ENCODE measurements at regions of chr20 and their contacts with region 1.

Region 1: DNA sequence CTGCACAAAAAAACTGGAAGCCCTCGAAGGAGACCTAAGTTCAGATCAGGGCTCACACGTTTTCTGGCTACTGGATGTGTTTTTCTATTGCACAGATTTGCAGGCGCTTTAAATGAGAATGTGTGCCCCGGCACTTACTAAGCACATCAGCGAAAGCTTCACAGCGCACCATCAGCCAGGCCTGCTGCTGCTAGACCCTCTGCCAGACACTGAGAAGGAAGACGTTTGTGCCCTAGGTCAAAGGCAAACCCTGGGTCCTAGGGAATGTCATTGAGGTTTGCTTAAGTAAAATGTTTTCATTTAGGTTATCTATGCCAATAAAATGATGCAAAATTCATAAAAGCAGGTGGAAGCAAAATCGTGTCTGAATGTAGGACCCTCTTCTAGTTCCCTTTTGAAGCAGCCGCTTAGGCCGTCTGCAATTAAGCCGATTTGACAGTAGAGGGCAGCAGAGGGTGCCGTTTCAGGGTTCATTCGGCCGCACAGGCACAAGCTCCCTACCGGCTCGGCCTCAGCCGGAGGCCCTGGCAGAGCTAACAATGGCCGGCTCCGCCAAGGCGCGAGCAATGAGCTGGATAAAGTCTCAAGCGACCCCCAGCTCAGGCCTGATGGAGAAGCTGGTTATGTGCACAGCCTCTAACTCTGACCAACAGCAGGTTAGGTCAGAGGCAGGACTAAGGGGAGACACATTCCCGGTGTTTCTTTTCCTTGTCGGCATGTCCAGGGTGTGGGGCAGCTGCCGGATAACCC is 107.2 kb upstream of the FOXA2 start:
- DNase-seq: peak; percentile 73 to 78 (median 74)
- ATAC-seq: peak; percentile 95
- H3K4me3 ChIP-seq: no peak overlapping the region
- H3K27ac ChIP-seq: no peak overlapping the region; the same call in 2 of the 3 replicates
- H3K4me1 ChIP-seq: peaks cover 0 to 3% of the 10 kb centered on the region in 2 experiments; a peak in 3 of 5 replicates
- H3K27me3 ChIP-seq: no peaks in the 10 kb centered on the region; a peak in 1 of 5 replicates
- CTCF ChIP-seq: peak; percentile 68 to 82 (median 80)
- EP300 ChIP-seq: no peak
- POLR2A ChIP-seq: no peak
- RAD21 ChIP-seq: peak; percentile 86 to 88

Region 2: GRCh38 chr20:22601361-22602141 is 90.0 kb before region 1 on chr20:
- CTCF ChIA-PET with region 1: no interaction called
- POLR2A ChIA-PET with region 1: no interaction called
- in situ Hi-C with region 1: no loop called
- intact Hi-C with region 1: no loop called
- DNase-seq: no peak
- ATAC-seq: no peak
- H3K4me3 ChIP-seq: no peak overlapping the region
- H3K27ac ChIP-seq: no peak overlapping the region
- H3K4me1 ChIP-seq: no peaks in the 10 kb centered on the region
- H3K27me3 ChIP-seq: peaks cover 0 to 7% of the 10 kb centered on the region in 2 experiments; a peak in 2 of 5 replicates
- CTCF ChIP-seq: no peak
- EP300 ChIP-seq: no peak
- POLR2A ChIP-seq: no peak
- RAD21 ChIP-seq: no peak

Region 3: GRCh38 chr20:22789676-22790075 is 98.1 kb after region 1 on chr20:
- CTCF ChIA-PET with region 1: no interaction called
- POLR2A ChIA-PET with region 1: no interaction called
- in situ Hi-C with region 1: no loop called
- intact Hi-C with region 1: loop called (anchors 10 kb)
- DNase-seq: no peak
- ATAC-seq: no peak
- H3K4me3 ChIP-seq: no peak overlapping the region
- H3K27ac ChIP-seq: no peak overlapping the region
- H3K4me1 ChIP-seq: no peaks in the 10 kb centered on the region
- H3K27me3 ChIP-seq: peaks cover 3 to 16% of the 10 kb centered on the region in 2 experiments; a peak in 4 of 5 replicates
- CTCF ChIP-seq: no peak
- EP300 ChIP-seq: no peak
- POLR2A ChIP-seq: no peak
- RAD21 ChIP-seq: no peak

Region 4: DNA sequence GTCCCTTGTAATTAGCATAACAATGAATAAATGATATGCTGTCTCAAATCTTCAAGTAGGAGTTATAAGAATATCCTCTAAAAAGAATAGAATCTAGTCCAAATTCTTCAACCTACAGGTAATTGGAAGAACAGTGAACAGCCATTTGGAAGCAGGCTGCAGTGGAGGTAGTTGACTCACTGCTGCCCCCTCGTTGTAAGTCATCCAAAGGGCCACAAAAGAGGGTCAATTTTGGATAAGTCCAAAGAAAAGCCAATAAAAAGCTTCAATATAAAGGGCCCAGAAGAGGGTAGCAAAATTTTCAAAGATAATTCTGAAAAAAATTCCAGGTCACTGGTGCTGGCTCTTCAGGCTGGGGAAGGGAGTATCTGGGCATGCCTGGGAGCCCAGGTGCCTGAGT is 282.8 kb after region 1 on chr20:
- CTCF ChIA-PET with region 1: no interaction called
- POLR2A ChIA-PET with region 1: no interaction called
- in situ Hi-C with region 1: no loop called
- intact Hi-C with region 1: loop called (anchors 1 kb)
- DNase-seq: peak; percentile 35 to 54 (median 52)
- ATAC-seq: peak; percentile 75
- H3K4me3 ChIP-seq: no peak overlapping the region
- H3K27ac ChIP-seq: no peak overlapping the region
- H3K4me1 ChIP-seq: no peaks in the 10 kb centered on the region
- H3K27me3 ChIP-seq: no peaks in the 10 kb centered on the region
- CTCF ChIP-seq: peak; percentile 57 to 69 (median 63)
- EP300 ChIP-seq: no peak
- POLR2A ChIP-seq: no peak
- RAD21 ChIP-seq: peak; percentile 71 to 79

Region 5: DNA sequence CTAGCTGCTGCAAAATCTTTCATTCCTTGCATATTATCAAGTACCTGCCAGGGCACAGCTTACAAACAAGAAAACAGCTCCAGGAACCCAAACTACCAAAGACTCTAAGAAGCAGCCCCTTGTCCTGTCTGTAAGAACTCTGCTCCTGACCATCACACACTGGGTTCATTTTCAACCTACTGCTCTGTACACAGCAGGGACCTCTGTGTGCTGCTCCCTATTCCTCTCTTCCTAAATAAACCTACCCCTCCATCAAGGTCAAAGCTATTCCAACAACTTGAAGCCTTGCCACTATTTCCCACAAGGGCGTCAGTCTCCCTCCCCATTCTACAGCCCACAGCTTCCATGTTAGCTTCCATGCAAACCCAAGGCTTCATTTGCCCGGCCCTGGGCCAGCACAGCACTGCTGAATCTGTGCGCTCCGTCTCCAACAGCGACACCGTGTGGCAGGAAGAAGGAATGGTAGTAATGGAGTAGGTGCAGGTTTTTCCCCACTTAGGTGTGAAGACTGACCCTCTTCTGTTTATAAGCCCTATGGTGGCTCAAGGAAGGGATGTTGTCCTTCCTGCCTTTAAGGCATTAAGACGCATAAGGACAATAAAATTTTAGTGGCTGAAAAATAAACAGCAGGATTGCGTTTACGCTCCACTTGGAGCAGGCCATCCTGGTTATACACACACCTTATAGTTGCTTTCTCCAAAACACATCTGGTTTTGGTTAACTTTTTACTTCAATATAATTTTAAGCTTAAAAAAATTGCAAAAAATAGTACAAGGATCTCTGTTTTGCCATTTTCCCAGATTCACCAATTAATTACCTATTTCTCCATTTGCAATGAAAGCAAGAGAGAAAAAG is 543.9 kb after region 1 on chr20:
- CTCF ChIA-PET with region 1: no interaction called
- POLR2A ChIA-PET with region 1: no interaction called
- in situ Hi-C with region 1: no loop called
- intact Hi-C with region 1: loop called (anchors 10 kb)
- DNase-seq: peak; percentile 61 to 75 (median 64)
- ATAC-seq: peak; percentile 99
- H3K4me3 ChIP-seq: no peak overlapping the region
- H3K27ac ChIP-seq: no peak overlapping the region
- H3K4me1 ChIP-seq: peaks cover 0 to 3% of the 10 kb centered on the region in 2 experiments; a peak in 1 of 5 replicates
- H3K27me3 ChIP-seq: no peaks in the 10 kb centered on the region
- CTCF ChIP-seq: peak; percentile 77 to 86 (median 78)
- EP300 ChIP-seq: no peak
- POLR2A ChIP-seq: no peak
- RAD21 ChIP-seq: peak; percentile 66 to 89

Region 6: DNA sequence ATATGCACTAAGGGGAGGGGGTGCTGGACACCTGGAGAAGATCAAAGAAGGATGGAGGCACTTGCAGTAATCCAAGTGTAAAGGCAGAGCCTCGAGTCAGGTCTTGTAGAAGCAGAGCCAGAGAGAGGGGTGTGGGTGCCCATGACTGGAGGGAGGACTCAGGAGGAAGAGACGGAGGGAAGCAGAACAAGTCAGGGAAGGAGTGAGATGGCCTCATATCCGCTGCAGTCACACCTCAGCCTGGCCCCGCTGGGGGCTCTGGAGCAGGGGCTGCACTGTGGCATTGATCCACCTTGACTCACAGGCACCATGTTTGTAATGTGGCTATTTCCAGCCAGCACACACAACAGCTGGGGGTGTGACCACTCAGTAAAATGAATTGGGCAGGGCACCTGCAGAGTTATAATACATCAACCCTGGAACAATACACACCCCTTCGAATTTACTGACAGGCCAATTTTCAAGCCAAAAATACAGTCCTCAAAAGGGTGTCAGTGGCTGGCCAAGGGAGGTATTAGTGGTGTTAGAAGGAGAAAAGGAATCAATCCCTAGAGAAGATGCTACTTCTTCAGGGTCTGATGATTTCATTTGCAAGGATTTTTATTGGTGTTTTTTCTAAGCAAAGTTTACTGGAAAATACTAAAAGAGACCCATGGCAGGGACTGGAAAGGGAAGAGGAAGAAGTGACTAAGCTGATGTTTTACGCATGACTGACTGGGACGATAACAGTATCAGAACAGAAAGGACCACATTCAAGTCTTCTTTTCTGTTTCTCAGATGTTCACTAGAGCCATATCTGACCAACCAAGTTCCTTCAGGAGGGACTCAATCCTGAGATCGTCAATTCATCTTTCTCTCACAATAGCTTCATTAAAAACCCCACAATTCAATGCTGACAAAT is 640.2 kb after region 1 on chr20:
- CTCF ChIA-PET with region 1: no interaction called
- POLR2A ChIA-PET with region 1: no interaction called
- in situ Hi-C with region 1: loop called (anchors 5 kb)
- intact Hi-C with region 1: no loop called
- DNase-seq: peak in 2 of 4 experiments; percentile 13 to 54
- ATAC-seq: peak; percentile 44; the same call in 2 of the 3 replicates
- H3K4me3 ChIP-seq: no peak overlapping the region
- H3K27ac ChIP-seq: no peak overlapping the region
- H3K4me1 ChIP-seq: peaks cover 0 to 14% of the 10 kb centered on the region in 2 experiments; a peak in 3 of 5 replicates
- H3K27me3 ChIP-seq: peaks cover 0 to 12% of the 10 kb centered on the region in 2 experiments; a peak in 2 of 5 replicates
- CTCF ChIP-seq: no peak
- EP300 ChIP-seq: peak; percentile 46
- POLR2A ChIP-seq: no peak
- RAD21 ChIP-seq: no peak

Region 7: GRCh38 chr20:23340524-23340923 is 649.0 kb after region 1 on chr20:
- CTCF ChIA-PET with region 1: interaction called, 12 read pairs
- POLR2A ChIA-PET with region 1: interaction called, 3 read pairs
- in situ Hi-C with region 1: no loop called
- intact Hi-C with region 1: loop called (anchors 2 kb)
- DNase-seq: peak; percentile 19 to 77 (median 44)
- ATAC-seq: peak; percentile 92
- H3K4me3 ChIP-seq: no peak overlapping the region
- H3K27ac ChIP-seq: no peak overlapping the region
- H3K4me1 ChIP-seq: peaks cover 0 to 3% of the 10 kb centered on the region in 2 experiments; a peak in 2 of 5 replicates
- H3K27me3 ChIP-seq: no peaks in the 10 kb centered on the region
- CTCF ChIP-seq: peak; percentile 64 to 76 (median 67)
- EP300 ChIP-seq: no peak
- POLR2A ChIP-seq: no peak
- RAD21 ChIP-seq: peak; percentile 76 to 86